ENCODE measurements at regions of chr5 and their contacts with region 1.

Region 1: DNA sequence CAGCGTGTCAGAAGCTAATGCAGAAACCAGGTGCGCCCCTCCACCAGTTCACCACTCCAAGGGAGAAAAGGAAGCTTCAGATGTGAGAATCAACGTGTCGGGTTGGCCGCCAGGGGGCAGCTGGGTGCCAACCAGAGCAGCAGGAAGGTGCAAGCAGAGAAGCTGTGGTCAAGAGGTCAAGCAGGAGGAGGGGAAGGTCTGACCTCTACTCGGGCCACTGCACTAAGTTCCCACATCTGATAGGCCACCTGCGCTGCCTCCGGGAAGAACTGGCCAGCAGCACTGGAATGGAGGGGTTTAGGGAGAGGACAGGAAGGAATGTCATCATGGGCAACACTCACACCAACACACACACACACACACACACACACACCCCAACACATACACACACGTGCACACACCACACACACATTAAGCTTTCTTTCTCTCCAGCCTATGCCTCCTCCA is 31.4 kb downstream of the ANXA6 start:
- DNase-seq: peak; percentile 78 to 86 (median 79)
- ATAC-seq: peak; percentile 64
- H3K4me3 ChIP-seq: no peak overlapping the region
- H3K4me1 ChIP-seq: no peaks in the 10 kb centered on the region
- CTCF ChIP-seq: peak; percentile 60

Region 2: GRCh38 chr5:151164686-151165392 is 38.6 kb after region 1 on chr5:
- intact Hi-C with region 1: loop called (anchors 2 to 5 kb)
- DNase-seq: peak in 2 of 3 donors; percentile 79 to 89
- ATAC-seq: peak; percentile 94
- H3K4me3 ChIP-seq: no peak overlapping the region
- H3K4me1 ChIP-seq: no peaks in the 10 kb centered on the region
- CTCF ChIP-seq: peak; percentile 81

Region 3: DNA sequence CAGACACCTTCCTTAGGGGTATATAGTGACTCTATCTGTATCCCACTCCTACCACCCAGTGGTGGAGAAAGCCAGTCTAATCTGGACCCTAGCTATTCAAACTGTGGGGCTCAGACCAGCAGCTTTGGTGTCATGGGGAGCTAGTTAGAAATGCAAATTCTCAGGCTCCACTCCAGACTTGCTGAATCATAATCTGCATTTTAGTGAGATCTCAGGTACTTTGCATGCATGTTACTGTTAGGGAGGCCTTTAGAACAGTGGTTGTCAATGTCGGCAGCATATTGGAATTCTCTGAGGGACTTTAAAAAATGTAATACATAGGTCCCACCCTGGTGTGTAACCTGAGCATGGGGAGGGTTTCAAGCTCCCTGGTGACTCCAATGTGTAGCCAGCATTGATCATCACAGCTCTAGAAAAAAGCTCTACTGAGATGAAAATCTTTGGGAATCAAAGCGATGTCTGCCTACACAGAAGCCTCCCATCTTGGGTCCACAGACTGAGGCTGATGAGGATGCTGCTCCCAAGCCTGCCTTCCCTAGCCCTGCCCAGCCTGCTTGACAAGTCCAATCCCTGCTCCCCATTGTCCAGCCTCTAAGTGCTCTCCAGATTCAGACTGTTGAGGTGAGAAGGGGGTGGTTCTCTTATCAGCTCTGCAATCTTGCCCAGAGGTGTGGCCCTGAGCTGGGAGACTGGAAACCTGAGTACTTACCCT is 114.9 kb after region 1 on chr5:
- intact Hi-C with region 1: loop called in 1 of 2 experiments (anchors 10 kb)
- DNase-seq: no peak
- ATAC-seq: no peak
- H3K4me3 ChIP-seq: no peak overlapping the region
- H3K4me1 ChIP-seq: no peaks in the 10 kb centered on the region
- CTCF ChIP-seq: no peak